Esophagus muscularis mucosa (tissue), 4 donors: ENCODE measurements at regions of chr4 and their contacts with region 1.

Region 1: GRCh38 chr4:77203380-77204197 is 46.6 kb downstream of the CCNG2 start:
- DNase-seq: no peak
- H3K4me3 ChIP-seq: no peak overlapping the region
- H3K27ac ChIP-seq: no peak overlapping the region
- H3K4me1 ChIP-seq: peaks cover 0 to 5% (median 3%) of the 10 kb centered on the region in 4 donors
- H3K27me3 ChIP-seq: no peaks in the 10 kb centered on the region
- CTCF ChIP-seq: peak; percentile 66 to 81 (median 75)
- EP300 ChIP-seq: no peak
- POLR2A ChIP-seq: no peak

Region 2: GRCh38 chr4:76420762-76421581 is 782.6 kb before region 1 on chr4 and contains the start of gene CCDC158:
- intact Hi-C with region 1: loop called (anchors 10 kb)
- DNase-seq: no peak
- H3K4me3 ChIP-seq: peak within 1 kb of the TSS; percentile 68 to 78 (median 68)
- H3K27ac ChIP-seq: peak within 1 kb of the TSS; percentile 51 to 71 (median 59)
- H3K4me1 ChIP-seq: peaks cover 0 to 22% (median 19%) of the 10 kb centered on the region in 4 donors
- H3K27me3 ChIP-seq: peaks cover 0 to 9% (median 0%) of the 10 kb centered on the region in 4 donors
- CTCF ChIP-seq: no peak
- EP300 ChIP-seq: no peak
- POLR2A ChIP-seq: no peak
- total RNA-seq, gene CCDC158: 0.66 to 1.8 (median 1.3) TPM

Region 3: GRCh38 chr4:76515975-76516843 is 687.4 kb before region 1 on chr4:
- intact Hi-C with region 1: loop called (anchors 5 kb)
- DNase-seq: no peak
- H3K4me3 ChIP-seq: no peak overlapping the region
- H3K27ac ChIP-seq: no peak overlapping the region
- H3K4me1 ChIP-seq: peaks cover 0 to 23% (median 14%) of the 10 kb centered on the region in 4 donors
- H3K27me3 ChIP-seq: no peaks in the 10 kb centered on the region
- CTCF ChIP-seq: no peak
- EP300 ChIP-seq: no peak
- POLR2A ChIP-seq: no peak

Region 4: GRCh38 chr4:76831711-76832373 is 371.7 kb before region 1 on chr4:
- intact Hi-C with region 1: no loop called
- DNase-seq: no peak
- H3K4me3 ChIP-seq: no peak overlapping the region
- H3K27ac ChIP-seq: peak overlapping the region; percentile 45 to 71 (median 56)
- H3K4me1 ChIP-seq: peaks cover 14 to 23% (median 19%) of the 10 kb centered on the region in 4 donors
- H3K27me3 ChIP-seq: no peaks in the 10 kb centered on the region
- CTCF ChIP-seq: no peak
- EP300 ChIP-seq: no peak
- POLR2A ChIP-seq: no peak

Region 5: DNA sequence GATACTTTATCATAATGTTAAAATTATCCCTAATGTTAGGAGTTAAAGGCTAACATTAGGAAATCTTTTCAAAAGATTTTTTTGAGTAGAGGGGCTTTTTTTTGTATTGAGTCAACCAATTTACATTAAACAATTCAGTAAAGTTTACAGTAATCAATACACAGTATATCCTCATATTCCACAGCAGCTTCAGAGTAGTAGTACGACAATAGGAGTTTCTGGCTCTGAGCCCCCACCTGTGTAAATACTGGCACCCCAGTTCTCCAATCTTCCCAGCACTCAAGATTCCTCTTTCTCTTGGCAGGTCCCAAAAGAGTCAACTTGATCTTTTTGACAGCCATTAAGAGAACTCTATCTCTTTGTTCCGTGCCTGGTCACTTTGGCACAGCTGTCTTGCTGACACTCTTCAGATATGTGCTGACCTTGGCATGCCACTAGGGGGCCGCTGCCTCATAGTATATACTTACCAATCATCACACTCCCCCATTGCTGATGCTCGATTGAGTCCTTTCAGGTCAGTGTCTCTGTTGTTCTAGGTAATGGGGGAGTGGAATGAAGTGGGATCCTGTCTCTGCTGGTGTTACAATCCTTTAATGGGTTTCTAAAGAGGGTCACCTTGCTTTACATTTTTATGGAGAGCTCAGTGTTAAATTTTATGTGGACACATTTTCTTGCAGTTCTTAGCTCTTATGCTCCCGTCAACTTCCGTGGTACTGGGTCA is 108.3 kb before region 1 on chr4:
- intact Hi-C with region 1: loop called (anchors 5 kb)
- DNase-seq: no peak
- H3K4me3 ChIP-seq: no peak overlapping the region
- H3K27ac ChIP-seq: no peak overlapping the region
- H3K4me1 ChIP-seq: peaks cover 3 to 19% (median 11%) of the 10 kb centered on the region in 4 donors
- H3K27me3 ChIP-seq: no peaks in the 10 kb centered on the region
- CTCF ChIP-seq: peak; percentile 79 to 88 (median 85)
- EP300 ChIP-seq: no peak
- POLR2A ChIP-seq: no peak

Region 6: GRCh38 chr4:77282305-77282704 is 78.7 kb after region 1 on chr4:
- intact Hi-C with region 1: no loop called
- DNase-seq: no peak
- H3K4me3 ChIP-seq: no peak overlapping the region
- H3K27ac ChIP-seq: no peak overlapping the region
- H3K4me1 ChIP-seq: no peaks in the 10 kb centered on the region
- H3K27me3 ChIP-seq: no peaks in the 10 kb centered on the region
- CTCF ChIP-seq: no peak
- EP300 ChIP-seq: no peak
- POLR2A ChIP-seq: no peak